T-cell (primary cell): ENCODE measurements at regions of chr4 and their contacts with region 1.

Region 1: GRCh38 chr4:88257726-88258125 is 26.6 kb downstream of the PPM1K start:
- DNase-seq: no peak
- ATAC-seq: no peak
- H3K4me3 ChIP-seq: no peak overlapping the region
- H3K4me3 Mint-ChIP-seq: no peak overlapping the region
- H3K27ac ChIP-seq: no peak overlapping the region
- H3K27ac Mint-ChIP-seq: no peak overlapping the region
- H3K4me1 ChIP-seq: no peaks in the 10 kb centered on the region
- H3K4me1 Mint-ChIP-seq: no peaks in the 10 kb centered on the region
- H3K27me3 ChIP-seq: no peaks in the 10 kb centered on the region
- H3K27me3 Mint-ChIP-seq: no peaks in the 10 kb centered on the region

Region 2: DNA sequence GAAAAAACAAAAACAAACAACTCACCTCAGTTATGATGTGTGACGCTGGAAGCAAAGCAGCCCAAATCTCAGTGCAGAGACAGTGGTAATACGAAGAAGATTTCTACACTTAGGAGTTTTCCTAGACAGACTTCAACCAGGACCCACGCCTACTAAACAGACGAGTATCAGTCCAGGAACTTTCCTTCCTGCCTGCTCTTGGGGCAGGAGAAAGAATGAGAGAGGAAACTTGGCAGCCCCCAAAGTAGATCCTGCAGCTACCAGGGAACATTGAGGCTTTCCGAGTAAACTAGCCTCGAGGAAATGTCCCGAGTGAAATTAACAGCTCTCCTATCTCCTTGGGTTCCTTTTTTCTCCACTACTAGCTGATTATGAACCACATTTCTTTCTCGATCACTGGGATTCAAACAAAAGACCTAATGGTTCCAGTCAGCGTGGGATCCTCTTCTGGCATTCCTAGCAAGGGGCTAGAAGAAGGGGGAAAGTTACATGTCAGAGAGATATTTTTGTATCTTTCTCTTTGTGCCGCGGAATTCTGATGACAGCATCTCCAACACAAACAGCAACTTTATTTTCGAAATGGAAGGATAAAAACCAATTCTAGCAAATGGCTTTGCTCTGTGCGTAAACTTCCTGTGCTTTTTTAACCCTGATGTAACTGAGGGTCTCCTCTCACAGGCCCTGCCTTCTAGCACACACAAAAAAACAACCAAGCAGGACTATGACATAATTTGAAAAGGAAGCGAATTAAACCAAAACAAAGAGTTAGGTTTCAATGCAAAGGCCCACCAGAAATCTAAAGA is 26.6 kb before region 1 on chr4:
- CTCF ChIA-PET with region 1: interaction called in 1 of 2 experiments, 11 read pairs
- POLR2A ChIA-PET with region 1: no interaction called
- DNase-seq: peak in 4 of 35 experiments; percentile 4 to 27 (median 10)
- ATAC-seq: peak in 2 of 4 experiments; percentile 67 to 86
- H3K4me3 ChIP-seq: peak overlapping the region in 1 of 2 donors; percentile 25
- H3K4me3 Mint-ChIP-seq: peak overlapping the region; percentile 46 to 65 (median 49)
- H3K27ac ChIP-seq: peak overlapping the region; percentile 73
- H3K27ac Mint-ChIP-seq: peak overlapping the region; percentile 62 to 86
- H3K4me1 ChIP-seq: peaks cover 3 to 5% of the 10 kb centered on the region in 2 experiments
- H3K4me1 Mint-ChIP-seq: peaks cover 18 to 19% (median 18%) of the 10 kb centered on the region in 3 donors
- H3K27me3 ChIP-seq: no peaks in the 10 kb centered on the region
- H3K27me3 Mint-ChIP-seq: no peaks in the 10 kb centered on the region

Region 3: DNA sequence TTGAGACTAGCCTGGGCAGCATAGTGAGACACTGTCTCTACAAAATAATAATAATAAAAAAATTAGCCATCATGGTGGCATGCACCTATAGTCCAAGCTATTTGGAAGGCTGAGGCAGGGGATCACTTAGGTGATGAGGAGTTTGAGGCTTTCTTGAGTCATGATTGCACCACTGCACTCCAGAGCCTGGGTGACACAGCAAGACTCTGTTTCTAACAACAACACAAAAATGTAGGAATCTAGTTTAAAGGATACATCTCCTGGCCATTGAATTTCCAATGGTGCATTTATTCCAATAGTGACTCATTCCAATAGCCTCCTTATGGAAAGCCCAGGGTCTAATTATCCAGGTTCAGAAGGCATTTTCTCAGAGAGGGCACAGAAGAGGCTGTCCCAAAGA is 99.0 kb after region 1 on chr4:
- CTCF ChIA-PET with region 1: no interaction called
- POLR2A ChIA-PET with region 1: no interaction called
- DNase-seq: no peak
- ATAC-seq: no peak
- H3K4me3 ChIP-seq: no peak overlapping the region
- H3K4me3 Mint-ChIP-seq: no peak overlapping the region
- H3K27ac ChIP-seq: no peak overlapping the region
- H3K27ac Mint-ChIP-seq: no peak overlapping the region
- H3K4me1 ChIP-seq: no peaks in the 10 kb centered on the region
- H3K4me1 Mint-ChIP-seq: no peaks in the 10 kb centered on the region
- H3K27me3 ChIP-seq: peaks cover 0 to 10% of the 10 kb centered on the region in 2 experiments
- H3K27me3 Mint-ChIP-seq: no peaks in the 10 kb centered on the region

Region 4: GRCh38 chr4:88709989-88710388 is 452.3 kb after region 1 on chr4:
- CTCF ChIA-PET with region 1: no interaction called
- POLR2A ChIA-PET with region 1: no interaction called
- DNase-seq: no peak
- ATAC-seq: no peak
- H3K4me3 ChIP-seq: no peak overlapping the region
- H3K4me3 Mint-ChIP-seq: no peak overlapping the region
- H3K27ac ChIP-seq: no peak overlapping the region
- H3K27ac Mint-ChIP-seq: no peak overlapping the region
- H3K4me1 ChIP-seq: no peaks in the 10 kb centered on the region
- H3K4me1 Mint-ChIP-seq: peaks cover 0 to 8% (median 2%) of the 10 kb centered on the region in 3 donors
- H3K27me3 ChIP-seq: no peaks in the 10 kb centered on the region
- H3K27me3 Mint-ChIP-seq: no peaks in the 10 kb centered on the region